ENCODE measurements at regions of chr1 and their contacts with region 1.

Region 1: DNA sequence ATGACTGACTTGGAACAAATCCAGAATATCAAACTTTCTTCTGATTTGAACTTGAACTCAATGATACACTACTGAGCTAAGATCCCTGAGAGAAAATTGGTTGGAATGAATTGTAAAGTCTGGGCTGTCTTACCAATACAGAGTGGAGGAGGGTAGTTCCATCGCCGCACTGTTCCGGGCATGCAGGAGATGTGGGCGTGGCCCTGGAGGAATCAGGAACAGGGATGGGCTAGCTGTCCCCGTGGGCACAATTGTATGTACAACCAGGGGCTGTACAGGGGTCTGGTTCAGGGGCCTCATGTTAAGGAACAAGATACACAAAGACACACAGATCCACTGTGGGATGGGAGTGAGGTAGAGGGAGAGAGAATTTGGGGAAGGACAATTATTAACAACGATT is 144.3 kb downstream of the ZSCAN20 start:
- DNase-seq: no peak
- CTCF ChIP-seq: no peak

Region 2: DNA sequence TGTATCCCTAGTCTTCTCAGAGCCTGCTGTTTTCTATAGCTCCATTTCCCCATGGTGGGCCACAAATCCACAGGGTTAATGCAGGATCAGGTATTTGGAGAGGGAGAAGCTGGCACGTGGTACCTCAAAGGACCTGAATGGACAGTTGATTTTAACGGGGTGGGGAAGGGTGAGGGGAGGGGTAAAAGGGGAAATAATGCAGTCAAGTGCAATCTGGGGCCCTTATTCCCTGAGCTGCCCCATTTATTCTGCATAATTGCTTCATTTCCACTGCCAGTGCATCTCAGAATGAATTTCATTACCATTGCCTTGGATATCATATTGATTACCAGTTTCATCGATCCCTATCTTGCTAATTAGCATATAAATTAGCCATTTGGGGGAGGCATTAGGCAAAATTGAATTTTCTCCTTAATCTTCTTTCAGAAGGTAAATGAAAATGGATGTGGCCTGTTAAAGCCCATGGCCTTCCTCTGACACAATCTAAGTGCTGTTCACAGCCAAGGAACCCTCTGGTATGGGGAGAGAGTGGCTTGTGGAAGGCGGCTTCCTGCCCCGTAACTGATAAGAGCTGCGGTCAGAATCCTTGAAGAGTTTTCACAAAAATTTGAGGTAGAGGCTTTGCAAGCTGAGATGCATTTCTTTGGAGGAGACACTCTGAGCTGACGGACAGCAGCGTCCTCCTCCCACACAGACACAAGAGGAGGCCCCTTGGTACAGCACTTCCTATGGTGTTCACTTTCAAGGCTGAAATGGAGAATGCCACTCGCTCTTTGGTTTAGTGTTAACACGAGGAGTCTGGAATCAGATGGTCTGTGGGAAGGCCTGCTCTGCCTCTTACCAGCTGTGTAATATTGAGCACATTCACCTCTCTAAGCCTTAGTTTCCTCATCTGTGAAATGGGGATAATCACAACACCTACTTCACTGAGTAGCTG is 220.3 kb before region 1 on chr1:
- CTCF ChIA-PET with region 1: no interaction called
- POLR2A ChIA-PET with region 1: no interaction called
- DNase-seq: no peak
- CTCF ChIP-seq: no peak

Region 3: GRCh38 chr1:33599516-33600115 is 17.2 kb before region 1 on chr1:
- CTCF ChIA-PET with region 1: interaction called, 11 read pairs
- POLR2A ChIA-PET with region 1: no interaction called
- DNase-seq: no peak
- CTCF ChIP-seq: no peak